ENCODE measurements at regions of chr12 and their contacts with region 1.

Region 1: GRCh38 chr12:22046090-22046967 is at the start of gene CMAS:
- DNase-seq: peak; percentile 56
- H3K4me3 ChIP-seq: peak within 1 kb of the TSS; percentile 90 to 92 (median 92)
- H3K27ac ChIP-seq: peak within 1 kb of the TSS; percentile 69
- H3K4me1 ChIP-seq: peaks cover 12% of the 10 kb centered on the region
- H3K27me3 ChIP-seq: no peaks in the 10 kb centered on the region
- CTCF ChIP-seq: no peak
- POLR2A ChIP-seq: peak; percentile 73
- total RNA-seq, gene CMAS: 34.4 and 35.4 TPM in 2 replicates

Region 2: DNA sequence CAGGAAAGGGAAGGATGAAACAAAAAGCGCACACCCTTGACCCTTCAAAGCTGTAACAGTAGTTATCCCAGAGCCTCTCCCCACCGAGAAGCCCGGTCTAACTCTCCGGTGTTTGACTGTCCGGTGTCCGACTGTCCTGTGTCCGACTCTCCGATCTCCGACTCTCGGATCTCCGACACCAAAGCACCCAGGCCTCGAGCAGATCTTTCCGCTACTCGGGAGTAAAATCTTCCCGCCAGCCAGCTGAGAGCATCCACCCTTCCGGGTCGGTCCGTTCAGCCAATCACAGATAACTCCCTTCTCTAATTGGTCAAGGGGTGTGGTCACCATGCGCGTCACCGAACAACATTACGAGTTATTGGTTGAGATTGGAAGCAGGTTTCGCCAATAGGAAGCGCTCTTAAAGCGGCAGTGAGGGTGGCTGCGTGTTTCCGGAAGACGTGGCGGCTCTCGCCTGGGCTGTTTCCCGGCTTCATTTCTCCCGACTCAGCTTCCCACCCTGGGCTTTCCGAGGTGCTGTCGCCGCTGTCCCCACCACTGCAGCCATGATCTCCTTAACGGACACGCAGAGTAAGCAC is 544.9 kb before region 1 on chr12 and contains the starts of genes GOLT1B and RECQL:
- CTCF ChIA-PET with region 1: no interaction called
- POLR2A ChIA-PET with region 1: no interaction called
- dilution Hi-C with region 1: no loop called
- intact Hi-C with region 1: loop called (anchors 1 kb)
- DNase-seq: peak; percentile 99
- H3K4me3 ChIP-seq: peak within 1 kb of the TSS; percentile 80 to 92 (median 88)
- H3K27ac ChIP-seq: peak within 1 kb of the TSS; percentile 87
- H3K4me1 ChIP-seq: peaks cover 31% of the 10 kb centered on the region
- H3K27me3 ChIP-seq: no peaks in the 10 kb centered on the region
- CTCF ChIP-seq: no peak
- POLR2A ChIP-seq: peak; percentile 90
- total RNA-seq, gene GOLT1B: 50.5 and 59.4 TPM in 2 replicates
- total RNA-seq, gene RECQL: 50.3 and 51.4 TPM in 2 replicates